Left colon (tissue), 2 donors: ENCODE measurements at regions of chr11 and their contacts with region 1.

Region 1: DNA sequence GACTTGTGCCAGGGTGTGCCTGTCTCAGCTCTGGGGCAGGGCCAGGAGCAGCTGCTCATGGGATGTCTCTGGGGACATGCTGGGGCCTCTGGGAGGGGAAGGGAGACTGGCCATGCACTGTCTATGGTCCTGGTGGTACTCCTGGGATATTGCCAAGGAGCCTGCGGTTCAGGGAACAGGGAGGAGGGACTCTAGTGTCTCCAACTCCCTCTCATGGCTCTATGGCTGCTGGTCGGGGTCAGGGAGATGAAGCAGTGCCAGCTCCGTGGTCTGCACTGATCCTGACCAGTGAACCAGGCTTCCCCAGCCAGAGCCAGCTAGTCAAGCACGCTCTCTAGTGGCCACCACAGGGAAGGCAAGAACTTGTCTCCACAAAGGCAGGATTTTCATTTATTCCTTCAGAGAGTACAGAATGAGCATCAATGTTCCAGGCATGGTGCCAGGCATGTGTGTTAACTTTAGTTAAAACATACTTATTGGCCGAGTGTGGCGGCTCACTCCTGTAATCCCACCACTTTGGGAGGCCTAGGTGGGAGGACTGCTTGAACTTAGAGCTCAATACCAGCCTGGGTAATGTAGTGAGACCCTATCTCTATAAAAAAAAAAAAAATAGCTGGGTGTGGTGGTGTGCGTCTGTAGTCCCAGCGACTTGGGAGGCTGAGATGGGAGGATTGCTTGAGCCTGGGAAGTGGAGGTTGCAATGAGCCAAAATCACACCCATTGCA is 2.5 kb upstream of the BEST1 start:
- DNase-seq: peak; percentile 78 to 86
- ATAC-seq: peak; percentile 93

Region 2: DNA sequence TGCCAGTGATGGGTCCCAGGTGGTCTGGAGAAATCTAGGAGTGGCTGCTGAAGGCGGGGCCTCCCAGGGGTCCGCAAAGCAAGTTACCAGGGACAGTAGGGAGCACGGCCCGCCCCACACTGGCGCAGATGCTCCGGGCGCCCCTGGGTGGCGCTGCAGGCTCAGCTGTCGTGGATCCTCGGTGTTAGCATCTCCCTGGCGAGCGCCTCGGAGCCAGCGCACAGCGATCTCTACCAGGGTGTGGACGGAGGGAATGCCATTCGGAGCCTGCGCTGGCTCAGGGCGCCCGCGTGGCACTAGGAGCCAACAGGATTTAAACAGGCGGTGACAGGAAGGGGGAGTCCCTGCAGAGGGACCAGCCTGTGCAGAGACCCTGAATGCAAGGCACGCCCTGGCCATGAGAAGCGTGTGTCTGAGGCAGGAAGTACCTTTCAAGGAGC is 76.5 kb before region 1 on chr11:
- intact Hi-C with region 1: no loop called
- DNase-seq: peak; percentile 56 to 75
- ATAC-seq: peak; percentile 94

Region 3: DNA sequence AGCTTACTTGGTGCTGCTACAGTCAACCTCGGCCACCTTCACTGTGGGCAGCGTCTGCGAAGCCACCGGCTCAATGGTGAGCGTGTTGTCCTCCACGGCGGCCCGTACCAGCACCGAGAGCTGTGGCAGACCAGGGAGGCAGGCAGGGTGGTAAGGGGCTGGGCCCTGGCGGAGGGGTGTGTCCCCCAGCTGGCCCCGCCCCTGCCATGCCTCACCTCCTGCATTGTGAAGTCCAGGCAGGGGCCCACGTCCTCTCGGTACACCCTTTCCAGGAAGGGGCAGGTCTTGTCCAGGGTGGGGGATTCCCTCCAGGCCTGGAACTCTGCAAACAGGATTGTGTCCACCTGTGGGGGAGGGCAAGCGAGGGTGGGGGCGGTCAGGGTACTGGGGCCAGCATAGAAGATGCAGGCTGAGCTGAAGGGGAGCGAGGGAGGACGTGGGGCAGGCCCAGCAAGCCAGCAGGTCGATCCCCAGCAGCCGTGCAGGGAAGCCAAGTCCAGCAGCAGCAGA is 43.1 kb before region 1 on chr11:
- intact Hi-C with region 1: loop called (anchors 2 to 5 kb)
- DNase-seq: peak; percentile 46 to 53
- ATAC-seq: peak; percentile 93

Region 4: DNA sequence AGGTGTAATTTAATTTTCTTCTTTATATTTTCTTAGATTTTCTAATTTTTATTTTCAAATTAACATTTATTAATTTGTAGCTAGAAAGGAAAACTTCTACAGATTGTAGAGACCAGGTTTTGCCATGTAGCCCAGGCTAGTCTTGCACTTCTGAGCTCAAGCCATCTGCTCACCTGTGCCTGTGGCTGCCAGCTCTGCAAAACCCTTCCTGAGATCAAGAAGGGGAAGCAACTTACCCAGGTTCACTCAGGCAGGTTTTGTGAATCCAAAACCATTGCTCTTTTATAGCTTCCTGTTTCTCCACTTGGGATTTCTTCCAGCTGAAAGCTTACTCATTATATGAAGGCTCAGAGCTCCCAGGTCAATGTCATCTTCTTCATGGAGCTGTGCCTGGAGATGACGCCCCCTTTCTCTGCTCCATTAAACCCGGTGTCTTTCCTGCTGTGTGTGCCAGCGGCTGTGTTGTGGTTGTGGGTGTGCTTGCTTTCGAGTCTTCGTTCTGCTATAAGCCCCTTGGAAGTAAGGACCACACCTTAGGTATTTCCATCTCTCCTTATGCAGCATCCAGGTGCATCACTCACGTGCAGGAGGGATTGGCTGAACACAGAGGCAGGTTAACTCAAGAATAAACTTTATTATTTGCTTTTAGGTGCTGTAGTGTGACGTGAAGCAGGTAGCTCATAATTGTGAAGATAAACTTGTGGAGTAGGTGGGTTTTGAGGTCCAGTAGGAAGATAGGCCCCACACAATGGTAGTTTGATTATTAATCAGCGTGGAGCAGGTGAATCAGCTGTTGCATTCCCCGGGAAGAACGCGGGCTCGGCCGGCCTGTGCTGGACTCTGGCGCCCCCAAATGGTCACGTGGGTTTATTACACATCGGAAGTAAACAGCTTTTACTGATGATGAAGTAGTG is 134.0 kb after region 1 on chr11:
- intact Hi-C with region 1: loop called in 1 of 2 experiments (anchors 10 kb)
- DNase-seq: peak; percentile 53 to 79
- ATAC-seq: peak; percentile 87

Region 5: GRCh38 chr11:62108017-62108750 is 160.5 kb after region 1 on chr11:
- intact Hi-C with region 1: no loop called
- DNase-seq: no peak
- ATAC-seq: peak; percentile 58